KBM-7 (cell line): ENCODE measurements at regions of chr5 and their contacts with region 1.

Region 1: GRCh38 chr5:32057162-32058096 is 116.7 kb downstream of the GOLPH3 start:
- DNase-seq: no peak

Region 2: DNA sequence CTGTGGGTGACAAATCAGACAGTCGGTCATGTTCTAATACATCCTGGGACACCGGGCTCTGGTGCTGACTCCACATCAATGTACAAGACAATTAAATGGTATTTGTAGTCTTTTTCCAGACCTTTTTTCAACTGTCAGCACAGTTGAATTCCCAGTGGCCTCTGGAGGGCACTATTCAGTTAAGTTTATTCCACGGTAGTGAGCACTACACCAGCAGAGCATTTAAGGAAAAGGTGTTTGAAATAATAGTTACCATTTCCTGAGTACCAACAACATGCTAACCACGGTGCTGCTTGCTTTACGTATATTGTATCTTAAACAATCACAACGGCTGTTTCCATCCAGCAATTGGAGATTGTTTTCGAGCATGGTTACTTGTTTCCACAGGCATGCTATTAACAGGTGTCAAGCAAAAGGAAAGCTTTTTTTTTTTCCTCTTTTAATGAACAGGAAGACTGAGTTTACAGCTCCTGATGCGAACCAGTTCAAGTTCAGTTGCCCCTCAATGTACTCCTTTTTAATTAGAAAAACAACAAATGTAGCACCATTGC is 231.8 kb before region 1 on chr5:
- in situ Hi-C with region 1: loop called (anchors 25 kb)
- DNase-seq: peak; percentile 69